Aorta (tissue), 5 donors: ENCODE measurements at regions of chr6 and their contacts with region 1.

Region 1: DNA sequence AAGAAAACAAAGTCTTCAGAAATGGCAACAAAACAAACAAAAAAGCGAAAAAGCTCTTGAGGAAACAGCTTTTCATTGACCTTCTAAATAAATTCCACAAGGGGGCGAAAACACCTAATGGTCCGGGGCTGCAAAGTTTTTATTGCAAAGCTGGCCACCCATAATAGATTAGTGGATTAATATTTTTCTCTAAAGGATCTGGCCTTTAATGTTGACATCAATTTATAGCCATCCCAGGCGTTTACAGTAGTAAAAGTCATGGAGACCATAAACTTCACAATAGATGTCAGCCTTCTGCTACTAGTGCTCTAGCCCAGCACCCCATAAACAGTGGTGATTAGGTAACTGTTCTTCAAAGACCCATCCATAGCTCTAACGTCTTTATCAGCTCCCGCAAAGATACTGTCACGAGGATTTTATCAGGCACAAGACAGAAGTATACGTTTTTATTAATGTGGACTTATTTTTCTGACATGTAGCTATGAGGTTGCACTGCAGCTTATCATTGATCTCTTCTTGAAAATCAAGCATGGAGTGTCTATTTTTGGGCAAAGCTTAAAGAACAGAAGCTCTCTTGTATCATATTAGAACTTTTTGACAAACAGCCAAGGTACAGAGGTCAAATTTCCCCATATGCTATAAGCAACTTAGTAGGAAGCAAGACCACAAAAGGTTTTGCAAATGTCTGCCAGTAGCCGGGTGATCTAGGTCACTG is 4.7 kb downstream of the CITED2 start:
- DNase-seq: no peak
- ATAC-seq: no peak
- H3K4me3 ChIP-seq: peak overlapping the region; percentile 9 to 10
- H3K27ac ChIP-seq: peak overlapping the region in 1 of 2 donors; percentile 25
- H3K4me1 ChIP-seq: peaks cover 0 to 3% of the 10 kb centered on the region in 2 donors
- H3K27me3 ChIP-seq: no peaks in the 10 kb centered on the region

Region 2: DNA sequence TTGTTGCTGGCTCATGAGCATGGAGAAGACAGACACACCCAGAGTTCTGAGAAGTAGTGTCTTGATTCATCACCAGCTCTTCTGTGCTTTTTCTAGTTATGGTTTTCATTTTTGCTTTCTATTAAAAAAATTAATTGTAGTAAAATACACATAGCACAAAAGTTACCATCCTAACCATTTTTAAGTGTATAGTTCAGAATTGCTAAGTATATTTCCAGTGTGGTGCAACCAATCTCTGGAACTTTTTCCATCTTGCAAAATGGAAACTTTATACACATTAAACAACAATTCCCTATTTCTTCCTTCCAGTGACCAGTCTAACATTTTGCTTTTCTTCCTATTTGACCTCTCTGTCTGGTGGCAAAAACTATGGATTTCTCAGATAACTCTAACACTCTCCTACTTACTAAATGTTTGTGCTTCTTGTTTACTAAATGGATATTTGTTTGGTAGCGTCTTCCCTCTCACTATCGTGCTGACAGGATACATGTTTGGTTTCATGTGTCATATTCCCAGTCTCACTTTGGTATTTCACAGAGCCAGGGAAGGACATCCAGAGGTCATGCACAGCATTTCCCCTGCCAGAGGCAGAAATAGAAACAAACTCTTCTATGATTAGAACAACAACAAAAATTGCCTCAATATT is 118.6 kb before region 1 on chr6:
- intact Hi-C with region 1: no loop called
- DNase-seq: no peak
- ATAC-seq: peak; percentile 55
- H3K4me3 ChIP-seq: no peak overlapping the region
- H3K27ac ChIP-seq: no peak overlapping the region
- H3K4me1 ChIP-seq: peaks cover 2 to 4% of the 10 kb centered on the region in 2 donors
- H3K27me3 ChIP-seq: no peaks in the 10 kb centered on the region

Region 3: GRCh38 chr6:139932671-139933070 is 562.9 kb after region 1 on chr6:
- intact Hi-C with region 1: loop called in 1 of 2 experiments (anchors 2 kb)
- DNase-seq: no peak
- ATAC-seq: no peak
- H3K4me3 ChIP-seq: no peak overlapping the region
- H3K27ac ChIP-seq: no peak overlapping the region
- H3K4me1 ChIP-seq: no peaks in the 10 kb centered on the region
- H3K27me3 ChIP-seq: no peaks in the 10 kb centered on the region